ENCODE measurements at regions of chr9 and their contacts with region 1.

Region 1: DNA sequence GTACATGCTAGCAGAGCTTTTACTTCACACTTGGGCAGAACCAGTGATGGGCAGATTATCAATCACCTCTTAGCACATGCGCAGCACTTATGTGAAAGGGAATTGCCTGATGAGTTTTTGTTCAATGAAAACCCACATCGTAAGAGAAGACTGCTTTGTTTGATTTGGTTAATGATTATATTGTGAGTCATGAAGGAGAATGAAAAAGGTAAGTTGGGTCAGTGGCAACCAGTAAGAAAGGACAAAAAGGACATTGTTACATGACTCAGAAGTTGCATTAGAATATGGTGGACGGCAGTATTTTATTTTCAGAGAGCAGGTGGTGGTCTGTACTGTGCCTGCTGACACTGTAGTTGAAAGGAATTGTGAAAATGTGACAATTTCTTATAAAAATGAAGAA is 127.4 kb downstream of the AOPEP start:
- DNase-seq: no peak

Region 2: DNA sequence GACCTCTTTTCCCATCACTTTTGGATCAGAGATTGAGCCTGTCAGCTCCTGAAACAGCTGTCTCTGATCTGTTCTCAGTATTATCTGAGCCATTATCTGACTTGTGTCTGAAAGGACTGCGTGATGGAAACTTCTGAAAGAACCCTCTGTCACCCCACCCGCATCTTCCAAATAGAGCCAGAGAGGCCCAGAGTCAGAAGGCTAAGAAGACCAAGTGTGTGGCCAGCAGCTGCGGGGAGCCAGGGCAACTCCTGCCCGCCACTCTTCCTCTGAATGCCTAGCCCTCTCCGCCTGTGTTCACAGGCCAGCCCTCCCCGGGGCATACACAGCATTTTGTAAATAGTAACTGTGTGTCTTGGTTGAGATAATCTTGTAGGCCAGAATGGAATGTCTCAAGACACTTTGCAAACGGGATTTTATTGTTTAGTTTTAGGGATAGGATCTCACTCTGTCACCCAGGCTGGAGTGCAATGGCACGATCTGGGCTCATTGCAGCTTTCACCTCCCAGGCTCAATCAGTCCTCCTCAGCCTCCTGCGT is 34.7 kb before region 1 on chr9:
- intact Hi-C with region 1: loop called in 1 of 2 experiments (anchors 5 kb)
- DNase-seq: no peak